ENCODE measurements at regions of chr7 and their contacts with region 1.

Region 1: DNA sequence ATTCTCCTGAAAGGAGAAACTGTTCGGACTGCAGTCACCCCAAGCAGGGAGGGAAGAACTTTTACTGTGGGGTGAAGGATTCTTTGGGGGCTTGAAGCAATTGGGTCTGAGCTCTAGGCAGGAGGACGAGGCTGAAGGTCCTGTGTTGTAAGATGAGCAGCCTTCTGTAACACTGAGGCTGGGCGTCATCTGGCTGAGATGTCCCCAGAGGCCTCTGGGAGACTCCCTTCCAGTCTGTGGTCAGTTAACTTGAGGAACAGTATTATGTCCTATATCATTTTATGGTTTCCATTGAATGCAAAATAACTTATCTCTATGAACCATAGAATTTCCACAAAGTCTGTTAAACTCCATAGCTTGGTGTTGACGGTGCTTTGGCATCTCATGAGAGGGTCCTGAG is 26.3 kb downstream of the FIGNL1 start:
- DNase-seq: no peak
- ATAC-seq: no peak
- H3K4me3 ChIP-seq: no peak overlapping the region
- H3K27ac ChIP-seq: no peak overlapping the region
- H3K4me1 ChIP-seq: no peaks in the 10 kb centered on the region
- H3K27me3 ChIP-seq: no peaks in the 10 kb centered on the region
- CTCF ChIP-seq: no peak
- POLR2A ChIP-seq: no peak

Region 2: GRCh38 chr7:50142425-50143017 is 281.3 kb before region 1 on chr7:
- intact Hi-C with region 1: loop called in 9 of 10 experiments (anchors 2 to 10 kb)
- DNase-seq: no peak
- ATAC-seq: no peak
- H3K4me3 ChIP-seq: no peak overlapping the region
- H3K27ac ChIP-seq: no peak overlapping the region
- H3K4me1 ChIP-seq: peaks cover 0 to 4% (median 0%) of the 10 kb centered on the region in 12 donors
- H3K27me3 ChIP-seq: peaks cover 0 to 9% (median 0%) of the 10 kb centered on the region in 9 donors
- CTCF ChIP-seq: peak; percentile 54 to 81 (median 72)
- POLR2A ChIP-seq: no peak

Region 3: GRCh38 chr7:50397320-50397970 is 26.4 kb before region 1 on chr7:
- intact Hi-C with region 1: no loop called
- DNase-seq: no peak
- ATAC-seq: no peak
- H3K4me3 ChIP-seq: no peak overlapping the region
- H3K27ac ChIP-seq: no peak overlapping the region
- H3K4me1 ChIP-seq: peaks cover 0 to 38% (median 0%) of the 10 kb centered on the region in 12 donors
- H3K27me3 ChIP-seq: peaks cover 0 to 48% (median 19%) of the 10 kb centered on the region in 9 donors
- CTCF ChIP-seq: no peak
- POLR2A ChIP-seq: no peak

Region 4: GRCh38 chr7:50502001-50502684 is 78.3 kb after region 1 on chr7:
- intact Hi-C with region 1: no loop called
- DNase-seq: peak; percentile 52 to 85 (median 80)
- ATAC-seq: peak; percentile 93 to 96 (median 96)
- H3K4me3 ChIP-seq: no peak overlapping the region
- H3K27ac ChIP-seq: peak overlapping the region in 8 of 12 donors; percentile 15 to 77 (median 48)
- H3K4me1 ChIP-seq: peaks cover 0 to 22% (median 13%) of the 10 kb centered on the region in 12 donors
- H3K27me3 ChIP-seq: no peaks in the 10 kb centered on the region
- CTCF ChIP-seq: no peak
- POLR2A ChIP-seq: no peak

Region 5: GRCh38 chr7:50661345-50662040 is 237.6 kb after region 1 on chr7:
- intact Hi-C with region 1: no loop called
- DNase-seq: no peak
- ATAC-seq: peak in 1 of 4 donors; percentile 8
- H3K4me3 ChIP-seq: no peak overlapping the region
- H3K27ac ChIP-seq: peak overlapping the region in 3 of 12 donors; percentile 9 to 26 (median 10)
- H3K4me1 ChIP-seq: peaks cover 7 to 97% (median 75%) of the 10 kb centered on the region in 12 donors
- H3K27me3 ChIP-seq: no peaks in the 10 kb centered on the region
- CTCF ChIP-seq: no peak
- POLR2A ChIP-seq: no peak

Measured in heart left ventricle (tissue), 16 donors.